MCF 10A (cell line): ENCODE measurements at regions of chr4 and their contacts with region 1.

Region 1: GRCh38 chr4:54999003-54999402 is 126.4 kb downstream of the KDR start:
- DNase-seq: peak; percentile 47
- H3K4me3 Mint-ChIP-seq: no peak overlapping the region
- H3K27ac Mint-ChIP-seq: no peak overlapping the region
- H3K4me1 Mint-ChIP-seq: peaks cover 26% of the 10 kb centered on the region
- H3K27me3 Mint-ChIP-seq: no peaks in the 10 kb centered on the region
- CTCF ChIP-seq: peak; percentile 47

Region 2: GRCh38 chr4:54986095-54986846 is 12.7 kb before region 1 on chr4:
- CTCF ChIA-PET with region 1: interaction called, 11 read pairs
- POLR2A ChIA-PET with region 1: interaction called, 3 read pairs
- intact Hi-C with region 1: no loop called
- DNase-seq: no peak
- H3K4me3 Mint-ChIP-seq: no peak overlapping the region
- H3K27ac Mint-ChIP-seq: no peak overlapping the region
- H3K4me1 Mint-ChIP-seq: no peaks in the 10 kb centered on the region
- H3K27me3 Mint-ChIP-seq: no peaks in the 10 kb centered on the region
- CTCF ChIP-seq: no peak

Region 3: GRCh38 chr4:55312489-55313101 is 313.6 kb after region 1 on chr4:
- CTCF ChIA-PET with region 1: interaction called, 33 read pairs
- POLR2A ChIA-PET with region 1: interaction called, 4 read pairs
- intact Hi-C with region 1: no loop called
- DNase-seq: peak; percentile 65
- H3K4me3 Mint-ChIP-seq: no peak overlapping the region
- H3K27ac Mint-ChIP-seq: no peak overlapping the region
- H3K4me1 Mint-ChIP-seq: no peaks in the 10 kb centered on the region
- H3K27me3 Mint-ChIP-seq: no peaks in the 10 kb centered on the region
- CTCF ChIP-seq: peak; percentile 52

Region 4: DNA sequence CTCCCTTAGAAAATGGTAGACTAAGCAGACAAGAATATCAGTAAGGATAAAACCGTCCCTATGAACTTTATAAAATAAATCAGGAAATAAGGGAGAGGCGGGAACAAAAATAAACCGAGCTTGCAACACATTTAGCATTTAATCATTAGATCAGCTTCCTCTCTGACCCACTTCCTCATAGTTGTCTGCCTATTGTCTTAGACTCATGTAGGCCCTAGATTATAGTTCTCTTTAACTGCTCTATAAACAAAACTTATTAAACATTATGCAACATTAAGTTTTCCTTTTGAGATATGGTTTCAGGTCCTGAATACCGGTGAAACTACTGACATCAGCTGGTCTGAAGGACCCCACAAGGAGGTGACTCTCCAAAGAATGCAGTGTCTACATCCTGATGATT is 331.2 kb after region 1 on chr4:
- CTCF ChIA-PET with region 1: interaction called, 25 read pairs
- POLR2A ChIA-PET with region 1: no interaction called
- intact Hi-C with region 1: no loop called
- DNase-seq: no peak
- H3K4me3 Mint-ChIP-seq: no peak overlapping the region
- H3K27ac Mint-ChIP-seq: no peak overlapping the region
- H3K4me1 Mint-ChIP-seq: no peaks in the 10 kb centered on the region
- H3K27me3 Mint-ChIP-seq: no peaks in the 10 kb centered on the region
- CTCF ChIP-seq: no peak

Region 5: GRCh38 chr4:55554453-55555030 is 555.5 kb after region 1 on chr4:
- CTCF ChIA-PET with region 1: no interaction called
- POLR2A ChIA-PET with region 1: no interaction called
- intact Hi-C with region 1: loop called (anchors 5 kb)
- DNase-seq: peak; percentile 48
- H3K4me3 Mint-ChIP-seq: no peak overlapping the region
- H3K27ac Mint-ChIP-seq: no peak overlapping the region
- H3K4me1 Mint-ChIP-seq: peaks cover 11% of the 10 kb centered on the region
- H3K27me3 Mint-ChIP-seq: no peaks in the 10 kb centered on the region
- CTCF ChIP-seq: peak; percentile 32